ENCODE measurements at regions of chr20 and their contacts with region 1.

Region 1: GRCh38 chr20:17403461-17403860 is 127.7 kb downstream of the BFSP1 start:
- DNase-seq: peak; percentile 6

Region 2: DNA sequence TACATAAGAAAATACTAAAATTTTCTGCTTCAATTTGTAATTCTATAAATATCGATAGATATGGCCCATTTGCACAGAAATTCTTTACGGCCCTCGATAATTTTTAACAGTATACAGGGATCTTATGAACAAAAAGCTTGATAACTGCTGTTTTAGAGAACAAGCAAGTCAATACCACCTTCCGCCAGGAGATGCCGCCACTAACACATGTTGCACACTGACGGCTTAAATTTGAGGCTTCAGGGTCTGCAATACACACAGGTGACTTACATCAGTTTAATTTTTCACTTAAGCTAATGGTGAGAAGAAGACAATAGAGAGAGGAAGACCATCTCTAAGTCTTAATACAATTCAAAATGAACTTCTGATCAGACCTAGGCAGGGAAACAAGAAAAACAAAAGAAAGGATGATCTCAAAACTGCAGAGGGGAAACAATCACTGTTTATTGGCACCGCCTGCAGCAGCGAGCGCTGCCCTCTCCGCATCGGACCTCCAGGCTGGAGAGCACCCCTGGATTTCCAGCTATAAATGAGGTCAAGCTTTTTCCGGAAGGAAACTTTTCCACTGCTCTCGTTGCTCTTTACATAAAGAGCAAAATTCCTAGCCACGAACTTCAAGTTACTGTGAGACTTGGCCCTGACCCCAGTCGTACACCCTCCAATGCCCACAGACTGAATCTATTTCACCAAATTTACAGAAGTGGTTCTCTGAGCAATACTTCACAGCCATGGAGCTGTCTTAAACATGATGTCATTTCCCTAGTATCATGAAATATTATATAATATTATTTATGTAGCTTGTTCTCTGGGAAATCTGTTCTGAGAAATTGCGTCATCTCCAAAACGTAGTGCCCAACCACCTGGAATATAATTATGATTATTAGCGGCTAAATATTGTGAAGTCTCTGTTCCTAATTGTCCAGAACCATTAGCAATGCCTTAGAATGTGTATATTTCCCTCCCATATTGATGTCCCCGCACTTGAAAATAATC is 601.2 kb before region 1 on chr20:
- in situ Hi-C with region 1: loop called (anchors 25 kb)
- DNase-seq: peak; percentile 49